ENCODE measurements at regions of chr16 and their contacts with region 1.

Region 1: GRCh38 chr16:4416200-4417032 is at the start of gene CORO7:
- DNase-seq: peak; percentile 98 to 100 (median 100)
- ATAC-seq: peak; percentile 68 to 69
- H3K4me3 Mint-ChIP-seq: peak within 1 kb of the TSS; percentile 92 to 99 (median 96)
- H3K27ac Mint-ChIP-seq: peak within 1 kb of the TSS; percentile 92 to 100 (median 99)
- H3K4me1 Mint-ChIP-seq: peaks cover 17 to 43% (median 34%) of the 10 kb centered on the region in 4 donors
- H3K27me3 Mint-ChIP-seq: no peaks in the 10 kb centered on the region
- polyA plus RNA-seq, gene CORO7: 44.6 to 79.9 (median 45.5) TPM

Region 2: GRCh38 chr16:4402439-4403132 is 13.8 kb before region 1 on chr16:
- POLR2A ChIA-PET with region 1: interaction called, 12 read pairs
- DNase-seq: peak; percentile 39 to 82 (median 66)
- ATAC-seq: peak; percentile 38 to 67
- H3K4me3 Mint-ChIP-seq: peak overlapping the region in 3 of 10 donors; percentile 31 to 41 (median 33)
- H3K27ac Mint-ChIP-seq: peak overlapping the region in 2 of 10 donors; percentile 91 to 97
- H3K4me1 Mint-ChIP-seq: peaks cover 19 to 46% (median 30%) of the 10 kb centered on the region in 4 donors
- H3K27me3 Mint-ChIP-seq: peaks cover 0 to 3% (median 0%) of the 10 kb centered on the region in 5 donors

Region 3: GRCh38 chr16:4465977-4466779 is 49.8 kb after region 1 on chr16:
- POLR2A ChIA-PET with region 1: no interaction called
- DNase-seq: peak in 2 of 10 donors; percentile 47 to 56
- ATAC-seq: peak; percentile 50 to 51
- H3K4me3 Mint-ChIP-seq: peak overlapping the region in 3 of 10 donors; percentile 32 to 55 (median 38)
- H3K27ac Mint-ChIP-seq: peak overlapping the region in 9 of 10 donors; percentile 31 to 92 (median 68)
- H3K4me1 Mint-ChIP-seq: peaks cover 0 to 26% (median 17%) of the 10 kb centered on the region in 4 donors
- H3K27me3 Mint-ChIP-seq: no peaks in the 10 kb centered on the region